Heart left ventricle (tissue), 16 donors: ENCODE measurements at regions of chr3 and their contacts with region 1.

Region 1: GRCh38 chr3:17140670-17141505 is 256.1 kb downstream of the PLCL2 start:
- DNase-seq: peak in 4 of 5 donors; percentile 41 to 85 (median 68)
- ATAC-seq: peak; percentile 81 to 88 (median 86)
- H3K4me3 ChIP-seq: peak overlapping the region in 2 of 12 donors; percentile 3 to 19
- H3K27ac ChIP-seq: peak overlapping the region in 11 of 12 donors; percentile 32 to 78 (median 64)
- H3K4me1 ChIP-seq: peaks cover 0 to 26% (median 9%) of the 10 kb centered on the region in 12 donors
- H3K27me3 ChIP-seq: no peaks in the 10 kb centered on the region
- CTCF ChIP-seq: peak in 11 of 12 donors; percentile 12 to 45 (median 29)
- POLR2A ChIP-seq: no peak

Region 2: GRCh38 chr3:16600780-16601539 is 539.9 kb before region 1 on chr3:
- intact Hi-C with region 1: loop called in 2 of 10 experiments (anchors 10 kb)
- DNase-seq: peak; percentile 73 to 85 (median 80)
- ATAC-seq: peak; percentile 48 to 76 (median 68)
- H3K4me3 ChIP-seq: peak overlapping the region in 3 of 12 donors; percentile 0 to 19 (median 14)
- H3K27ac ChIP-seq: no peak overlapping the region
- H3K4me1 ChIP-seq: peaks cover 0 to 7% (median 0%) of the 10 kb centered on the region in 12 donors
- H3K27me3 ChIP-seq: no peaks in the 10 kb centered on the region
- CTCF ChIP-seq: peak; percentile 73 to 96 (median 89)
- POLR2A ChIP-seq: no peak

Region 3: DNA sequence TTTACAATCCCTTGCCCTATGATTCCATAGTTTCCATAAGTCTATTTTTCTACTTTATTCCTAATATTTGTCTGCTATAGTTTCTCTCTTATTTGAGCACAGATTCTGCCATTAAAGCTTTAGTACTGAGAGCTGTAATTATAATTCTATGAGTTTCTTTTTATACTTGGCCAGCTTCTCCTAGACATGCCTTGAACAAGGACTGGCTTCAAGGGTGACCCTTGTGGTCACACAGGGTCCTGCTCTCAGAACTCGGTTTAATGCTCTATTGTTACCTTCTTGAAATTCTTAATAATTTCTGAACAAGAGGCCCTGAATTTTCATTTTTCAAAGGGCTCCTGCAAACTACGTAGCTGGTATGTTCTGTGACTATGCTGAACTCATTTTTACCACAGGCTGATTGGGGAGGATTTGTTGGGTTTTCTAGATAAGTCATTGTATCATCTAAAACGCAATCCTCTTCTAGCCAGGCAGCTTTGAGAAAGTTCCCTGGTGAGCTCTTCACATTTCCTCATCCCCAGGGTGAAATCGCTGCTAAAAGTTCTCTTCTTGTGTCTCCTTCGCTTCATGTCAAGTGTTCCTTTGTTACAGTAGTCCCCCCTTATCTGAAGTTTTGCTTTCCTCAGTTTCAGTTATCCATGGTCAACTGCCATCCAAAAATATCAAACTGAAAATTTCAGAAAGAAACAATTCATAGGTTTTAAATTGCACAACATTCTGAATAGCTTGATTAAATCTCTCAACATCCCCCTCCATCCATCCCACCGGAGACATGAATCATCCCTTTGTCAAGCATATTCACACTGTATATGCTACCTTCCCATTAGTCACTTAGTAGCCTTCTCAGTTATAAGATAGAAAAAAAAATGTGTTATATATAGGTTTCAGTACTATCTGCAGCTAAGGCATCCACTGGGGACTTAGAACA is 268.7 kb before region 1 on chr3:
- intact Hi-C with region 1: loop called in 1 of 10 experiments (anchors 10 kb)
- DNase-seq: no peak
- ATAC-seq: no peak
- H3K4me3 ChIP-seq: no peak overlapping the region
- H3K27ac ChIP-seq: no peak overlapping the region
- H3K4me1 ChIP-seq: peaks cover 0 to 21% (median 0%) of the 10 kb centered on the region in 12 donors
- H3K27me3 ChIP-seq: no peaks in the 10 kb centered on the region
- CTCF ChIP-seq: no peak
- POLR2A ChIP-seq: no peak

Region 4: DNA sequence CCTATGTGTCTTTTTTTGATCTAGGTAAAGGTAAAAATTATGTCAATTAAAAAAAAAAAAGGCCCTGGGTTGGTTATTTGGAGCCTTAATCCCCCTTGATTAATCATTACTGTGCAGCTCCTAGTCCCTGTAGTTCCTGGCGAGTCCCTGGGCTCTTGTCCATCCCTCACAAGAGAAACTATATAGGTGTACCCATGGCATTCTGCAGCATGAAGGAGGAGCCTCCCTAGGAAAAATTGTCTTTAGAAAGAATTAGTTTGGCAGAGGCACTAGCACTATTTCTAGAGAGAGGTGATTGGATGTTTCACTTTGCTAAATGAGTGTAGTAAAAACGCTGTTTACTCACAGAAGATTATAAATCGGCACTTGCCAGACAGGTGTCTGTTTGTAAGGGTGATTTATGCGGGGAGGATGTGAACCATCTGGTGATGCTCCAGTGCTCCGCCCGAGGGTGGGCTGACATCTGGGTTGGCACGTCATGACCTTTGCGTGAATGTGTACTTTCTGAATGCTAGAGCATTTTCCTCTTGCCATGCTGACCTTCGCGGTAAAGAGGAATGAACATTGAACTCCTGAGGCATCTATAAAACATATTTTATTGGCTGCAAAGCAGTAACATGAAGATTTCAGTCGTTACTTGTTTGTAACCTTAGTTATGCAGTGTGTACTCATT is 243.5 kb before region 1 on chr3:
- intact Hi-C with region 1: loop called in 2 of 10 experiments (anchors 2 to 5 kb)
- DNase-seq: peak in 1 of 5 donors; percentile 35
- ATAC-seq: peak in 1 of 4 donors; percentile 17
- H3K4me3 ChIP-seq: peak overlapping the region in 4 of 12 donors; percentile 5 to 29 (median 12)
- H3K27ac ChIP-seq: peak overlapping the region; percentile 26 to 79 (median 63)
- H3K4me1 ChIP-seq: peaks cover 0 to 59% (median 30%) of the 10 kb centered on the region in 12 donors
- H3K27me3 ChIP-seq: no peaks in the 10 kb centered on the region
- CTCF ChIP-seq: no peak
- POLR2A ChIP-seq: no peak

Region 5: DNA sequence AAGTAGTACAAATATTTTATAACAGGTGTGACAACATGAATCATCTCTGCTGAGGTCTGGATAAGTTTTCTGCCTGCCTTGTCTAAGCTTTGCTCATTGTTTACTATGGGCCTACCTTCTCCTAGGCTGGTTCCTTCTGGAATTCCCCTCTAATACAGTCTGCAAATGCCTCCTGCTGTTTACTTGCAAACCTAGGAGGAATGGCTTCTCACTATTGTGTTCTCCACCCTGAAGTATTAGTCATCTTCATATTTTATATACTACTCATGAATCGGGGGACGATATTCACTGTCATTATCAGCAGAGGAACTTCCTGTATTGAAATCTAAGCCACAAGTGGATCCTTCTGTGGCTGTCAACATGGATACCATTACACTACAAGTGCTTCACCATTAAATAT is 101.3 kb before region 1 on chr3:
- intact Hi-C with region 1: loop called in 1 of 10 experiments (anchors 5 kb)
- DNase-seq: no peak
- ATAC-seq: peak in 3 of 4 donors; percentile 61 to 65 (median 65)
- H3K4me3 ChIP-seq: no peak overlapping the region
- H3K27ac ChIP-seq: peak overlapping the region in 9 of 12 donors; percentile 2 to 65 (median 51)
- H3K4me1 ChIP-seq: peaks cover 0 to 49% (median 16%) of the 10 kb centered on the region in 12 donors
- H3K27me3 ChIP-seq: no peaks in the 10 kb centered on the region
- CTCF ChIP-seq: peak in 1 of 12 donors; percentile 12
- POLR2A ChIP-seq: no peak

Region 6: DNA sequence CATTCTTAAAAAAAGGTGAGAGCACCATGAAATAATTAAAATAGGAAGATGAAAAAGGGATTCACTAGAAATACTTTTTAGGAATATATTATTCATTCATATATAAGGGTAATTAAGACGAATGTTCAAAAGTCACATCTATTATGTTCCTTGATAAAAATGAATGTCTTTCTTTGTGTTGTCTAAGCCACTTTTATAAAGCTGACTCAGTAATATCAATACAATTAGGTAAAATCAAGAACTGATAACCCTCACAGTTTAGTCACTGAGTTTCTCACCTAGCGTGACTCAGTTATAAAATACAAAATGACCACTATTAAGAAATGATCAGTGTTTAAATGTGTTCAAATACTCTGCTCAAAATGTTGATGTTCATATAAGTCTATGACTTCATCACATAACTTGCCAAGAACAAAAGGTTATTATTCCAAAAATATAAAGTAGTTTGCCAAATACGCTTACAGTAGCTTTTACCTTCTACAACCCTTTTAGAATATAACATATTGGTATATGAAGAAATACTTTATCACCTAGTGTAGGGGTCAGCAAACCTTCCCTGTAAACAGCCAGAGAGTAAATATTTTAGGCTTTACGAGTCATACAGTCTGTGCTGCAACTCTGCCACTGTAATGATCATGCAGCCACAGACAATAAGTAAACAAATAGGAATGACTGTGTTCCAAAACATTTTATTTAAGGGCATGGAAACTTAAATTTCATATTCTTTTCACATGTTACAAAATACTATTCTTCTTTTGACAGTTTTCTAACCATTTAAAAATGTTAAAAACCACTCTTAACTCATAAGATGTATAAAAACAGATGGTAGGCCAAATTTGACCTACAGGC is 231.7 kb after region 1 on chr3:
- intact Hi-C with region 1: no loop called
- DNase-seq: no peak
- ATAC-seq: no peak
- H3K4me3 ChIP-seq: no peak overlapping the region
- H3K27ac ChIP-seq: no peak overlapping the region
- H3K4me1 ChIP-seq: no peaks in the 10 kb centered on the region
- H3K27me3 ChIP-seq: no peaks in the 10 kb centered on the region
- CTCF ChIP-seq: no peak
- POLR2A ChIP-seq: no peak